SK-N-SH (cell line): ENCODE measurements at regions of chr2 and their contacts with region 1.

Region 1: GRCh38 chr2:29010946-29011345 is 29.8 kb downstream of the TOGARAM2 start:
- DNase-seq: no peak
- H3K4me3 ChIP-seq: no peak overlapping the region
- H3K27ac ChIP-seq: no peak overlapping the region
- H3K4me1 ChIP-seq: peaks cover 0 to 17% of the 10 kb centered on the region in 2 experiments; a peak in 1 of 4 replicates
- H3K27me3 ChIP-seq: peaks cover 6% of the 10 kb centered on the region; the same call in 1 of the 2 replicates
- CTCF ChIP-seq: no peak
- EP300 ChIP-seq: no peak
- RAD21 ChIP-seq: no peak

Region 2: GRCh38 chr2:29024882-29025430 is 14.0 kb after region 1 on chr2:
- CTCF ChIA-PET with region 1: interaction called, 12 read pairs
- POLR2A ChIA-PET with region 1: no interaction called
- DNase-seq: no peak
- H3K4me3 ChIP-seq: no peak overlapping the region
- H3K27ac ChIP-seq: no peak overlapping the region
- H3K4me1 ChIP-seq: peaks cover 0 to 9% of the 10 kb centered on the region in 2 experiments; a peak in 1 of 4 replicates
- H3K27me3 ChIP-seq: peaks cover 2% of the 10 kb centered on the region; the same call in 1 of the 2 replicates
- CTCF ChIP-seq: no peak
- EP300 ChIP-seq: no peak
- RAD21 ChIP-seq: no peak

Region 3: DNA sequence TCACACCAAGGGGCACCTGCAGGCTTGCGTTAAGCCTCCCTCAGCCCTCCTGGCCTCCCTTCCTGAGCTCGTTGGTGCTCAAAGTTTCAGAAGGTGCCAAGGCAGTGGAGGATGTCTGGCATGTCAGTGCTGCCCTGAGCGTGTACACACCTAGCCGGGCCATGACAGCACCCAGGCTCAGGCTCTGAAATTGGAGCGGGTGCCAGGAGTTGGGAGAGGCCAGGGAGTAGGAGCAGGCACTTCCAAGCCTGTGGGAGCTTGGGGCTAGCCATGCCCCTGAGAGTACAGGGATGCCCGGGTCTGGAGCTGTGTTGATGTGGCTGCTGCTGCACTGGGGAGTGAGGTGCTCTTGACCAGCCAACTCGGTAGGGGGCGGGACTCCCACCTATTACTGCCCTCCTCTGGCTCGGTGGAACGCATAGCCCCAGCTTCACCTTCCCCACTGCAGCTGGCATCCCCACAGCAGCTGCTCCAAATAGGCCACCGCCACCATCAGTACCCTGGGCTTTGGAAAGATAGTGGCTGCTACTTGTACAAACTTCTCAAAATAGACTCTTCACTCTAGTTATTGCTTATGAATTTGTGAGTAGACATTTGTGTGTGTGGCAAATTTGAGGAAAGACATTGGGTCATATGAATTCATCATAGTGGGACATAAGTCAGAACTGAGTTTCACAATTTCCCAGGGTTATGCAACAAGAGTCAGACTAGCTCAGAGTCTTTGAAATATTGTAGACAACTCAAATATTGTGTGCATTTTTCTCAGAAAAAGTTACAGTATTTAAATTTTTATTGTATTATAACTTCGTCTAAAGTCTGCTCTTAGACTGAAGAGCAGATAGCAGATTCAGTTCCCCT is 70.2 kb after region 1 on chr2:
- CTCF ChIA-PET with region 1: no interaction called
- POLR2A ChIA-PET with region 1: no interaction called
- DNase-seq: no peak
- H3K4me3 ChIP-seq: no peak overlapping the region
- H3K27ac ChIP-seq: no peak overlapping the region
- H3K4me1 ChIP-seq: peaks cover 0 to 5% of the 10 kb centered on the region in 2 experiments; a peak in 2 of 4 replicates
- H3K27me3 ChIP-seq: no peaks in the 10 kb centered on the region
- CTCF ChIP-seq: no peak
- EP300 ChIP-seq: no peak
- RAD21 ChIP-seq: no peak